PC-3 (cell line): ENCODE measurements at regions of chrX and their contacts with region 1.

Region 1: DNA sequence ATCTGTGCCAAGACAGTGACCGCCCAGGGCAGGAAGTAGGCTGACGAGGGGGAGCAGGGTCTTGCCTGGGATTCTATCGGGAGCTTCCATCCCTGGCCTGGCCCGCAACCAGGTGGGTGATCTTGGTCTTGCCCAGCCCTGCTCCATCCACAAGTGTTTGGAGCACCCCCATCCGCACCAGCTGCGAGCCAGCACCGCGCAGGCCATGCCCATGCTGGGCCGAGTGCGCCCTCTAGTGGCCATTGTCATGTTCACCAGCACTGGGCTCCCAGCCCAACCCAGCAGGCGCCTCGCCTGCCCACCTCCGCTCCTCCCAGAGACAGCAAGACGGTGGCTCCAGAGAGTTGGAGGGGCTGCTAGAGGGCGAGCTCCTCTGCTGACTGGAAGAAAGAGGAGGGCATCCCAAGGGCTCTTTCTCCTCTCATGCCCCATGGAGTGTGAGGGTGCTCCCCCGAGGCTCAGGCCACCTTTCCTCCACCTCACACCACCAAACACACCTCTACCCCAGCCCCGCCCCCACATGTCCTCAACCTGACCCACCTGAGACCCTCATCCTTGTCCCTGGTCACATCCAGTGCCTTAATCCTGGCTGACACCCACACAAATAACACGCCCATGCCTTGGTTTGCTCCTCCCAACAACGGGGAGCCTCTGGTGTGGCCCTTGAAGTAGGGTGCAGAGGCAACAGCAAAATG is 9.8 kb upstream of the ATP2B3 start:
- DNase-seq: peak; percentile 78
- ATAC-seq: peak; percentile 98
- H3K4me3 ChIP-seq: no peak overlapping the region
- H3K27ac ChIP-seq: no peak overlapping the region
- H3K4me1 ChIP-seq: no peaks in the 10 kb centered on the region
- H3K27me3 ChIP-seq: no peaks in the 10 kb centered on the region
- CTCF ChIP-seq: peak; percentile 86

Region 2: DNA sequence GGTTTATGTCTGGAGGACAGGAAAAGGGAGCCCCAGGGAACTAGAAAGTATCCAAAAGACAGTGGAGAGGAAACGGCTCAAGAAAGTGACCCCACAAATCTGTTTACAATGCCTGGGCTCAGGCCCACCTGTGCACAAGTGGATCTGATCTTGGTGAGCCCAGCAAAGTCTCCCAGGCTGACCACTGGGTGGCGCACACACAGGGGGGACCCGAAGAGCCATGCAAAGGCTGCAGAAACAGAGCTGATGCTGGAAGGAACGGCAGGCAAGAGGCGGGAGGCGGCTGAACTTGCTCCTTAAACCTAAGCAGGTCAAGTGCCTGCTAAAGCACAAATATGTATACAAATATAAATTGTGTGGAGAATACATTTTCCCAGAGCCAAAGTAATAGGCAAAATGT is 46.8 kb before region 1 on chrX:
- CTCF ChIA-PET with region 1: interaction called, 5 read pairs
- POLR2A ChIA-PET with region 1: no interaction called
- intact Hi-C with region 1: loop called (anchors 1 kb)
- DNase-seq: peak; percentile 57
- ATAC-seq: peak; percentile 85
- H3K4me3 ChIP-seq: no peak overlapping the region
- H3K27ac ChIP-seq: no peak overlapping the region
- H3K4me1 ChIP-seq: no peaks in the 10 kb centered on the region
- H3K27me3 ChIP-seq: no peaks in the 10 kb centered on the region
- CTCF ChIP-seq: peak; percentile 76

Region 3: DNA sequence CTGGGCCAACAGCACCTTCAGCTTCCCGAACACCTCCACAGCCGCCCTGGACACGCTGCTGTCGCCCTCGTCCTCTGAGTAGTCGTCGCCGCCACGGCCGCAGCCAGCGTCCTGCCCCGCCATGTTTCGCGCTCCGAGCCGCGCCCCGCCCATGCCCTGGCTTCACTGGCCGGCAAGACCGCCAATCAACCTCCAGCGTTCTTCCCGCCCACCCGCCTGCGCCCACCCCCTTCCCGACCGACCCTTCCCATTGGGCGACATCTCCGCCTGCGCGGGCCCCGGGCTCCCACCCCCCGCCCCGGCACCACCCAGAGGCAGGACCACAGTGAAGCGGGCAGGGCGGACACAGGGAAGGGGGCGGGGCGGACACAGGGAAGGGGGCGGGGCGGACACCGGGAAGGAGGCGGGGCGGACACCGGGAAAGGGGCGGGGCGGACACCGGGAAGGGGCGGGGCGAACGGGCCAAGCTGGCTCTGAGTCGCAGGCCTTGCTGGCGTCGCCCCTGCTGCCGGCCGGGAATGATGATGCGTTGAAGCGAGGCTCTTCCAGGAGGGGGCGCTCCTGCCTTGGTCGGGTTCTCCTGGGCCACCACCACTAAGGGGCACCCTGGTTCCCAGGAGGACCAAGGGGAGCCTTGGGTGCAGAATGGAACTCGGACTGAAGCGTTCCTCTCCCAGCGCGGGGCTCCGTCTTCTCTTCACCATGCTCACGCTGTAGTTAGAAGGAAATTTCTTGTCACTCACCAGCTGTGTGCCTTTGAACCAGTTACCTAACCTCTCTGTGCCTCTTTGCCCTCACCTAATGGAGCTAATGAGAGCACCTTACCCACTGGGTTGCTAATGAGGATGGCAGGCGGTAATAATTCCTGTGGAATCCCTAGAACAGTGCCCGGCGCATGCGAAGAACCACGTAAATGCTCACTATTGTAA is 36.9 kb before region 1 on chrX and contains the start of gene HAUS7:
- CTCF ChIA-PET with region 1: interaction called, 3 read pairs
- POLR2A ChIA-PET with region 1: interaction called, 16 read pairs
- intact Hi-C with region 1: loop called (anchors 2 kb)
- DNase-seq: peak; percentile 87
- ATAC-seq: peak; percentile 85
- H3K4me3 ChIP-seq: peak within 1 kb of the TSS; percentile 95
- H3K27ac ChIP-seq: no peak within 1 kb of the TSS
- H3K4me1 ChIP-seq: no peaks in the 10 kb centered on the region; the same call in 1 of the 2 replicates
- H3K27me3 ChIP-seq: no peaks in the 10 kb centered on the region
- CTCF ChIP-seq: peak; percentile 77
- total RNA-seq, gene HAUS7: 34.1 and 46.0 TPM in 2 replicates

Region 4: GRCh38 chrX:153885968-153886903 is 378.6 kb after region 1 on chrX and contains the start of gene L1CAM:
- CTCF ChIA-PET with region 1: no interaction called
- POLR2A ChIA-PET with region 1: no interaction called
- intact Hi-C with region 1: no loop called
- DNase-seq: peak; percentile 13
- ATAC-seq: peak; percentile 43
- H3K4me3 ChIP-seq: peak within 1 kb of the TSS; percentile 63
- H3K27ac ChIP-seq: no peak within 1 kb of the TSS
- H3K4me1 ChIP-seq: peaks cover 9% of the 10 kb centered on the region; the same call in 1 of the 2 replicates
- H3K27me3 ChIP-seq: peaks cover 6% of the 10 kb centered on the region; the same call in 1 of the 2 replicates
- CTCF ChIP-seq: no peak
- total RNA-seq, gene L1CAM: 5.2 and 11.2 TPM in 2 replicates